ENCODE measurements at regions of chr9 and their contacts with region 1.

Region 1: DNA sequence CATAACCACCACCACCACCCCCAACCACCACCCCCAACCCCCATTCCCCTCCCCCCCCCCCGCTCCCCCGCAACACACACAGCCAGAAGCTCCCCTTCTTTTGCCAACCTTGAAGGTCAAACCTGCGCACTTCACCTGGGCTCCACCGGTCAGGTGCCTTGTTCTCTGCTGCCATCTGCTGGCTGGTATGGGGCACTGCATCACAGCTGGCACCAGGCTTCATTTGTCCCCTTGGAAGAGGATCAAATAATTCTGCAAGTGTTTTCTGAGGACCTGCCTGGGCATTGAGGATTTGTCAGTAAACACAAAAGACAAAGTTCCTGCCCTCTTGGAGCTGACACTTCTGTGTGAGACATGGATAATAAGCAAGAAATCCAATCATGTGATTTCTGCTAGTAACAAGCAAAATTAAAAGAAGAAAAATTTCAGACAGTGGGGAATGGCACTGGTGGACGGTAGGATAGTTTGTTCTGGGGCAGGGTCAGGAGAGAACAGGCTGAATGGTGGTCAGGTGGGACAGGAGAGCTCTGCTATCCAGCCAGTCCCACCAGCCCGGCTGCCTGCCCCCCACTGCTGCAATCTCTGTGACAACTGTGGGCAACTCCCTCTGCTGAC is 55.6 kb upstream of the LMX1B start:
- DNase-seq: peak in 4 of 5 donors; percentile 75 to 83 (median 80)
- H3K4me3 ChIP-seq: no peak overlapping the region
- H3K27ac ChIP-seq: no peak overlapping the region
- H3K4me1 ChIP-seq: no peaks in the 10 kb centered on the region
- H3K27me3 ChIP-seq: no peaks in the 10 kb centered on the region
- CTCF ChIP-seq: peak; percentile 100

Region 2: DNA sequence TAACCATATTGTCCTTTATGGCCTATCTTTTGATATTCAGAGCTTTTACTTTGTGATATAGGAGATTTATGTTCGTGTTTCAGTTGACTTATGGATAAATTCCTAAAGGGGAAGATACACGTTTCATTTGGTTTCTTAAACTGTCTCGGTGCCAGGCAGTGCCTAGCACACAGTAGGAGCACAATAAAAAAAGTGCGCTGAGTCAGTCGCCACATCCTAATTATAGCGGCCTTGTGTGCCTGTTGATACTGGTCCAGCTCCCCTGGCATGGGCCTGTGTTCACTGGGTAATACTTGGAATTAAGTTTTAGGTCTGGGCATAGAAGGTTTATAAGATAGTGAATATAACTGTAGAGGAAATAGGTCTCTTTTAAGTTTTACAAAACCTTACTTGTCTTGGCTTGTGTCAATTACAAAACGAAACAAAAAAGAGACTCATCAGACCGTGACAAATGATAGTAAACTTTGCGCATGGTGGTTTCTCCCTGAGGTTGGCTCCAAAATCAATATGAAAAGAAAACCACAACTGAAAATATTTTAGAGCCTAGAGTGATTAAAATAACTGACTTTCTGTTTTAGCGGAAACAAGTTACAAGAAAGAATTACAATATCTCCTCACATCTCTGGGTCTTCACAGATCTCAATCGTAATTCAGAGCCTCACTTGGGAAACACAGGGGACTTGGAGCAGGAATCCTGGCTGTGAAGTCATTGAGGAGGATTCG is 146.8 kb before region 1 on chr9:
- intact Hi-C with region 1: no loop called
- DNase-seq: no peak
- H3K4me3 ChIP-seq: no peak overlapping the region
- H3K27ac ChIP-seq: no peak overlapping the region
- H3K4me1 ChIP-seq: no peaks in the 10 kb centered on the region
- H3K27me3 ChIP-seq: no peaks in the 10 kb centered on the region
- CTCF ChIP-seq: no peak

Region 3: GRCh38 chr9:126500684-126501382 is 57.3 kb before region 1 on chr9:
- intact Hi-C with region 1: loop called (anchors 5 kb)
- DNase-seq: peak; percentile 89 to 94 (median 92)
- H3K4me3 ChIP-seq: no peak overlapping the region
- H3K27ac ChIP-seq: no peak overlapping the region
- H3K4me1 ChIP-seq: no peaks in the 10 kb centered on the region
- H3K27me3 ChIP-seq: peaks cover 4% of the 10 kb centered on the region
- CTCF ChIP-seq: peak; percentile 98

Region 4: GRCh38 chr9:126853667-126854066 is 295.5 kb after region 1 on chr9:
- intact Hi-C with region 1: no loop called
- DNase-seq: no peak
- H3K4me3 ChIP-seq: no peak overlapping the region
- H3K27ac ChIP-seq: no peak overlapping the region
- H3K4me1 ChIP-seq: no peaks in the 10 kb centered on the region
- H3K27me3 ChIP-seq: no peaks in the 10 kb centered on the region
- CTCF ChIP-seq: no peak

Measured in kidney (tissue), 22 donors.